CD4-positive, alpha-beta T cell (primary cell): ENCODE measurements at regions of chr1 and their contacts with region 1.

Region 1: GRCh38 chr1:207997486-207998268 is 86.8 kb upstream of the CD34 start:
- DNase-seq: peak; percentile 15 to 69 (median 30)
- ATAC-seq: peak; percentile 78
- H3K4me3 ChIP-seq: no peak overlapping the region
- H3K4me3 Mint-ChIP-seq: no peak overlapping the region
- H3K27ac ChIP-seq: no peak overlapping the region
- H3K27ac Mint-ChIP-seq: no peak overlapping the region
- H3K4me1 ChIP-seq: no peaks in the 10 kb centered on the region
- H3K4me1 Mint-ChIP-seq: no peaks in the 10 kb centered on the region
- H3K27me3 ChIP-seq: no peaks in the 10 kb centered on the region
- H3K27me3 Mint-ChIP-seq: peaks cover 6% of the 10 kb centered on the region
- CTCF ChIP-seq: peak; percentile 80

Region 2: GRCh38 chr1:208007938-208008342 is 10.3 kb after region 1 on chr1:
- CTCF ChIA-PET with region 1: interaction called, 15 read pairs
- POLR2A ChIA-PET with region 1: no interaction called
- intact Hi-C with region 1: no loop called
- DNase-seq: no peak
- ATAC-seq: no peak
- H3K4me3 ChIP-seq: no peak overlapping the region
- H3K4me3 Mint-ChIP-seq: no peak overlapping the region
- H3K27ac ChIP-seq: no peak overlapping the region
- H3K27ac Mint-ChIP-seq: no peak overlapping the region
- H3K4me1 ChIP-seq: no peaks in the 10 kb centered on the region
- H3K4me1 Mint-ChIP-seq: no peaks in the 10 kb centered on the region
- H3K27me3 ChIP-seq: no peaks in the 10 kb centered on the region
- H3K27me3 Mint-ChIP-seq: no peaks in the 10 kb centered on the region
- CTCF ChIP-seq: no peak